Activated CD4-positive, alpha-beta memory T cell treated with anti-CD3 and anti-CD28 coated beads for 36 hours (primary cell): ENCODE measurements at regions of chr22 and their contacts with region 1.

Region 1: GRCh38 chr22:40024201-40025061 is 29.7 kb downstream of the FAM83F start:
- DNase-seq: peak; percentile 76
- H3K4me3 Mint-ChIP-seq: no peak overlapping the region
- H3K27ac Mint-ChIP-seq: no peak overlapping the region
- H3K4me1 Mint-ChIP-seq: no peaks in the 10 kb centered on the region
- H3K27me3 Mint-ChIP-seq: no peaks in the 10 kb centered on the region

Region 2: DNA sequence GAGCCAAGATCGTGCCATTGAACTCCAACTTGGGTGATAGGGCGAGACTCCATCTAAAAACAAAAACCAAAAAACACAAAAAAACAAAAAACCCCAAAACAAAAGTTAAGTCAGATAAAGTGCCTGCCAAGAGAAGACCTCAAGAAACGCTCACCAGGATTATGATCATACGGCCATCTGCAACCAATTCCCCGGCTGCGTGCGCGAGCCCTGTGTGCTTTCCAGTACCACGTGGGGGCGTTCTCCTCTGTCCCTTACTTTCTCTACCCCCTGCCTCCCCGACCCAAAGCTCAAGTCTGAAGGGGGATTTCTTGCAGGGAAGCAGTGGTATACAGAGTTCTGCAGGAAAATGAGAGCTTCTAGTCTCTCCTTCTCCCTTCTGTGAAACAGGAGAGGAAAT is 481.3 kb before region 1 on chr22:
- CTCF ChIA-PET with region 1: interaction called, 206 read pairs
- POLR2A ChIA-PET with region 1: no interaction called
- intact Hi-C with region 1: no loop called
- DNase-seq: peak; percentile 50
- H3K4me3 Mint-ChIP-seq: no peak overlapping the region
- H3K27ac Mint-ChIP-seq: no peak overlapping the region
- H3K4me1 Mint-ChIP-seq: peaks cover 14% of the 10 kb centered on the region
- H3K27me3 Mint-ChIP-seq: peaks cover 28% of the 10 kb centered on the region

Region 3: GRCh38 chr22:39622881-39623367 is 401.5 kb before region 1 on chr22:
- CTCF ChIA-PET with region 1: interaction called, 17 read pairs
- POLR2A ChIA-PET with region 1: no interaction called
- intact Hi-C with region 1: no loop called
- DNase-seq: peak; percentile 78
- H3K4me3 Mint-ChIP-seq: no peak overlapping the region
- H3K27ac Mint-ChIP-seq: no peak overlapping the region
- H3K4me1 Mint-ChIP-seq: peaks cover 4% of the 10 kb centered on the region
- H3K27me3 Mint-ChIP-seq: peaks cover 4% of the 10 kb centered on the region

Region 4: GRCh38 chr22:39908737-39909136 is 115.7 kb before region 1 on chr22:
- CTCF ChIA-PET with region 1: interaction called, 10 read pairs
- POLR2A ChIA-PET with region 1: no interaction called
- intact Hi-C with region 1: no loop called
- DNase-seq: peak; percentile 69
- H3K4me3 Mint-ChIP-seq: peak overlapping the region; percentile 83
- H3K27ac Mint-ChIP-seq: peak overlapping the region; percentile 93
- H3K4me1 Mint-ChIP-seq: peaks cover 58% of the 10 kb centered on the region
- H3K27me3 Mint-ChIP-seq: no peaks in the 10 kb centered on the region

Region 5: GRCh38 chr22:39940757-39941305 is 83.6 kb before region 1 on chr22:
- CTCF ChIA-PET with region 1: interaction called, 28 read pairs
- POLR2A ChIA-PET with region 1: no interaction called
- intact Hi-C with region 1: no loop called
- DNase-seq: no peak
- H3K4me3 Mint-ChIP-seq: peak overlapping the region; percentile 28
- H3K27ac Mint-ChIP-seq: peak overlapping the region; percentile 54
- H3K4me1 Mint-ChIP-seq: peaks cover 91% of the 10 kb centered on the region
- H3K27me3 Mint-ChIP-seq: no peaks in the 10 kb centered on the region

Region 6: GRCh38 chr22:40002935-40003715 is 21.3 kb before region 1 on chr22:
- CTCF ChIA-PET with region 1: interaction called, 16 read pairs
- POLR2A ChIA-PET with region 1: no interaction called
- intact Hi-C with region 1: no loop called
- DNase-seq: no peak
- H3K4me3 Mint-ChIP-seq: no peak overlapping the region
- H3K27ac Mint-ChIP-seq: no peak overlapping the region
- H3K4me1 Mint-ChIP-seq: no peaks in the 10 kb centered on the region
- H3K27me3 Mint-ChIP-seq: peaks cover 1% of the 10 kb centered on the region

Region 7: GRCh38 chr22:40044102-40044869 is 19.9 kb after region 1 on chr22:
- CTCF ChIA-PET with region 1: interaction called, 35 read pairs
- POLR2A ChIA-PET with region 1: no interaction called
- intact Hi-C with region 1: no loop called
- DNase-seq: peak; percentile 99
- H3K4me3 Mint-ChIP-seq: peak overlapping the region; percentile 93
- H3K27ac Mint-ChIP-seq: peak overlapping the region; percentile 99
- H3K4me1 Mint-ChIP-seq: peaks cover 27% of the 10 kb centered on the region
- H3K27me3 Mint-ChIP-seq: peaks cover 6% of the 10 kb centered on the region

Region 8: GRCh38 chr22:40070701-40071100 is 46.3 kb after region 1 on chr22:
- CTCF ChIA-PET with region 1: no interaction called
- POLR2A ChIA-PET with region 1: no interaction called
- intact Hi-C with region 1: no loop called
- DNase-seq: no peak
- H3K4me3 Mint-ChIP-seq: no peak overlapping the region
- H3K27ac Mint-ChIP-seq: no peak overlapping the region
- H3K4me1 Mint-ChIP-seq: peaks cover 63% of the 10 kb centered on the region
- H3K27me3 Mint-ChIP-seq: no peaks in the 10 kb centered on the region

Region 9: GRCh38 chr22:40114411-40114810 is 90.0 kb after region 1 on chr22:
- CTCF ChIA-PET with region 1: no interaction called
- POLR2A ChIA-PET with region 1: no interaction called
- intact Hi-C with region 1: no loop called
- DNase-seq: no peak
- H3K4me3 Mint-ChIP-seq: no peak overlapping the region
- H3K27ac Mint-ChIP-seq: no peak overlapping the region
- H3K4me1 Mint-ChIP-seq: peaks cover 72% of the 10 kb centered on the region
- H3K27me3 Mint-ChIP-seq: no peaks in the 10 kb centered on the region